ENCODE measurements at regions of chr5 and their contacts with region 1.

Region 1: GRCh38 chr5:132251220-132251725 is 6.2 kb upstream of the PDLIM4 start:
- DNase-seq: no peak
- H3K4me3 Mint-ChIP-seq: no peak overlapping the region
- H3K27ac Mint-ChIP-seq: no peak overlapping the region
- H3K4me1 Mint-ChIP-seq: peaks cover 8% of the 10 kb centered on the region
- H3K27me3 Mint-ChIP-seq: no peaks in the 10 kb centered on the region
- CTCF ChIP-seq: no peak

Region 2: DNA sequence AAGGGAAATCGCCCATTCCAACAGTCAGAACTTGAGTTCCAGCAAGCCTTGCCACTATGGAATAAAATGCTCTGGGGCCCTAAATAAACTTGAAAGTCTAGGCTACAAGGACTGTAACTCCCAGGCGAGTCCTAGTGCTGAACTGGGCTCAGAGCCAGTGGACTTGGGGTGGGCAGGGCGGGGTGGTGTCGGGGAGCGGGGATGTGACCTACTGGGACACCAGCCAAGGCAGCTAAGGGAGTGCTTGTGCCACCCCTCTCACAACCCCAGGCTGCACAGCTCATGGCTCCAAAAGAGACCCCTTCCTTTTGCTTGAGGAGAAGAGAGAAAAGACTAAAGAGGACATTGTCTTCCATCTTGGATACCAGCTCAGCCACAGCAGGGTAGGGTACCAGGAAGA is 367.3 kb before region 1 on chr5:
- CTCF ChIA-PET with region 1: interaction called, 10 read pairs
- intact Hi-C with region 1: no loop called
- DNase-seq: no peak
- H3K4me3 Mint-ChIP-seq: no peak overlapping the region
- H3K27ac Mint-ChIP-seq: no peak overlapping the region
- H3K4me1 Mint-ChIP-seq: no peaks in the 10 kb centered on the region
- H3K27me3 Mint-ChIP-seq: peaks cover 34% of the 10 kb centered on the region
- CTCF ChIP-seq: no peak